Left colon (tissue), 2 donors: ENCODE measurements at regions of chr6 and their contacts with region 1.

Region 1: DNA sequence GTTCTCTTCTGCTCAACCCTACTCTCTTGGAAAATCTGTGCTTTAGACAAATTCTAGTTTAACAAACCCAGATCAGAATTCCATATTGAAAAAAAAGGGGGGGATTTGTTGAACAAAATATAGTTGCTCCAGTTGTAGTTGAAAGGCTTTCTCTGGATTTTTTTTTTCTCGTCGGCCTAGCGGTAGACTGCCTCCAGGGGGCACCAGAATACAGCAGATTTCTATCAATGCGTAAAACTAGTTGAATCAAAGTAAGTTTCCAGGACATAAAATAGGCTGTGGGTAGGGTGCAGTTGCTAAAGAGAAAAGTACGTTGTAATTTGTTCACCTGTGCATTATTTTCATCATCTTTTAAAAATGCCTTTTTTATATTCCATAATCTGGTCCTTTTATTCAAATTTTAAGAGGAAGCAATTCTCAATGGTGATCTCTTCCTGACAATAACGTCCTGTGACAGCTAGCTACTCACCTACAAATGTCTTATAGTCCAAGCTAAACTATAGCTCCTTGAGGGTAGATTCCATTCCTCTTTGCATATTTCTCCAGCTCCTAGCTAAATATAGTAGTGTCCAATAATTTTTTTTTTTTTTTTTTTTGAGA is 105.4 kb downstream of the PERP start:
- DNase-seq: peak in 1 of 2 donors; percentile 77
- ATAC-seq: peak; percentile 69

Region 2: DNA sequence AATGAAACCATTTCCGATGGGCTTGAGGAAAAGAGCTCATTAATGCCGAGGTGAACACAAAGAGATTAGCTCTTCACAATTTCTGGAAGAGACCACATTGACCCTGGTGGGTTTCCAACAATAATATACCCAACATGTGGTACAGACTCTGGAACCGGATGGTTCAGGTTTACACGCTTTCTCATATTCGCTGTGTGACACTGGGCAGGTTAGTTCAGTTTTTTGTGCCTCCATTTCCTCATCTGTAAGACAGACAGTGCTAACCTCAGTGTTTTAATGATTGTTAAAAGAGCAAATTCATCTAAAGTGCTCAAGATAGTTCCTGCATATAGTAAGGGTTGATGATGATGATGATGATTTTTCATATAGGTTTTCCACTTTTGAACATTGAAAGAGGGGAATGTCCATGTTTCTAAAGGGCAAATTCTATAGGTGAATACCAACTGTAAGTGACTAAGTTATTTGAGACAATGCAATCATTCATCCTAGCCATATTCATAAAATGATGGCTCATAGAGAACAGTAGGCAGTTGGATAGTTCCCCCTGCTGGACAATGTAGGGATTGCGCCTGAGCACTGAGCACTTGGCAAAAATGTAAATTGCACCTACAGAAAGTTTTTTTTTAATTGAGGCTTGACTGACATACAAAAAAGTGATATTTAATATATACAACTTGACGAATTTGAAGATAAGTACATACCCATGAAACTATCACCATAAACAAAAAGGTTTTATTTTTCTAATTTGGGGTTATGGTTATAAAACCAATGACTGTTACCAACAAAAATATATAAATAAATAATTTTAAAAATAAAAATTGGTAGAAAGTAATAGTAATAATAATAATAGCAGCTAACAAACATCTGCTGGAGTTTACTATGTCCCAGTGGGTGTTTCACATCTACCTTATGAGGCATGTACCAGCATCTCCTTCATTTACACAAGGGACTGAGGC is 107.5 kb after region 1 on chr6:
- intact Hi-C with region 1: loop called (anchors 2 to 10 kb)
- DNase-seq: peak; percentile 34 to 85
- ATAC-seq: no peak

Region 3: GRCh38 chr6:138403801-138404661 is 402.2 kb after region 1 on chr6 and contains the start of gene HEBP2:
- intact Hi-C with region 1: loop called in 1 of 2 experiments (anchors 10 kb)
- DNase-seq: peak; percentile 98 to 99
- ATAC-seq: peak; percentile 86
- total RNA-seq, gene HEBP2: 90.0 to 95.3 TPM